OCI-LY7 (cell line): ENCODE measurements at regions of chr7 and their contacts with region 1.

Region 1: GRCh38 chr7:69932034-69932628 is 333.9 kb downstream of the AUTS2 start:
- DNase-seq: peak; percentile 60
- H3K4me3 ChIP-seq: no peak overlapping the region
- H3K27ac ChIP-seq: no peak overlapping the region
- H3K4me1 ChIP-seq: peaks cover 13% of the 10 kb centered on the region
- CTCF ChIP-seq: peak; percentile 92

Region 2: DNA sequence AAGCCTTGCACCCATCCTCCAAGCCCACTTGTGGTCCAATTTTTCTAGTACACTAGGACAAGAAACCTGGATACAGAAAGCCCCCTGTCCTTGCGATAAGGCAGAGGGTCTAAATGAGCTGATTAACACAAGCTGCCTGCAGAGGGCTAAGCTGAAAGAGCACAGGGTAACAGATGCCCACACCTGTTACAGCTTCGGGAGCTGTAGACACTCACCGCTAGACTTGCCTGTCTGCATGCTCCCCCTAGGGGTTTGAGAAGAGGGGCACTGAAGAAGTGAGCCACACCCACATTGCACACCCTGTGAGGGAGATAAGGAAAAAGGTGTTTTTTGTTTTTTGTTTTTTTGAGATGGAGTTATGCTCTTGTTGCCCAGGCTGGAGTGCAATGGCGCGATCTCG is 720.4 kb before region 1 on chr7:
- CTCF ChIA-PET with region 1: no interaction called
- POLR2A ChIA-PET with region 1: no interaction called
- intact Hi-C with region 1: loop called (anchors 10 kb)
- DNase-seq: peak; percentile 82
- H3K4me3 ChIP-seq: no peak overlapping the region
- H3K27ac ChIP-seq: no peak overlapping the region
- H3K4me1 ChIP-seq: peaks cover 30% of the 10 kb centered on the region
- CTCF ChIP-seq: peak; percentile 75

Region 3: GRCh38 chr7:69403169-69403568 is 529.0 kb before region 1 on chr7:
- CTCF ChIA-PET with region 1: no interaction called
- POLR2A ChIA-PET with region 1: no interaction called
- intact Hi-C with region 1: loop called (anchors 5 kb)
- DNase-seq: peak; percentile 73
- H3K4me3 ChIP-seq: no peak overlapping the region
- H3K27ac ChIP-seq: no peak overlapping the region
- H3K4me1 ChIP-seq: no peaks in the 10 kb centered on the region
- CTCF ChIP-seq: peak; percentile 82

Region 4: GRCh38 chr7:69843653-69844052 is 88.5 kb before region 1 on chr7:
- CTCF ChIA-PET with region 1: no interaction called
- POLR2A ChIA-PET with region 1: no interaction called
- intact Hi-C with region 1: no loop called
- DNase-seq: peak; percentile 57
- H3K4me3 ChIP-seq: peak overlapping the region; percentile 20
- H3K27ac ChIP-seq: peak overlapping the region; percentile 39
- H3K4me1 ChIP-seq: peaks cover 84% of the 10 kb centered on the region
- CTCF ChIP-seq: no peak

Region 5: DNA sequence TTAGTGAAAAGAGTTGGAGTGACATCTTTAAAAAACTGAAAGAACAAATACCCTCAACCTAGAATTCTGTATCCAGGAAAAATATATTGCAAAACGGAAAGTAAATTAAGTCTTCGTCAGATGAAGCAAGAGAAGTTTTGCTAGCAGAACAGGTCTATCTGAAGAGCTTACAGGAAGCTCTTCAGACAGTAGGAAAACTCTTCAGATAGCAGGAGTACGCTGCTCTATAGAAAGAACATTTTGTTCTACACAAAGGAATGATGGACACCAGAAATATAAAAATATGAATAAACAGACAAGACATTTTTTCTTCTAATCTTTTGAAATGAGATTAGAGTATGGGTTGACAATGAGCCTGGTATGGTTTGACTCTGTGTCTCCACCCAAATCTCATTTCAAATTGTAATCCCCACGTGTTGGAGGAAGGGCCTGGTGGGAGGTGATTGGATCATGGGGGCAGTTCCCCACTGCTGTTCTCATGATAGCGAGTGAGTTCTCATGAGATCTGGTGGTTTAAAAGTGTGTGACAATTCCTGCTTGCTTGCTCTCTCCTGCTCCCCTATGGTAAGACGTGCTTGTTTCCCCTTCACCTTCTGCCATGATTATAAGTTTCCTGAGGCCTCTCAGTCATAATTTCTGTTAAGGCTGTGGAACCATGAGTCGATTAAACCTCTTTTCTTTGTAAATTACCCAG is 233.5 kb after region 1 on chr7:
- CTCF ChIA-PET with region 1: no interaction called
- POLR2A ChIA-PET with region 1: no interaction called
- intact Hi-C with region 1: loop called (anchors 10 kb)
- DNase-seq: no peak
- H3K4me3 ChIP-seq: no peak overlapping the region
- H3K27ac ChIP-seq: no peak overlapping the region
- H3K4me1 ChIP-seq: peaks cover 8% of the 10 kb centered on the region
- CTCF ChIP-seq: no peak